MCF 10A (cell line): ENCODE measurements at regions of chr19 and their contacts with region 1.

Region 1: DNA sequence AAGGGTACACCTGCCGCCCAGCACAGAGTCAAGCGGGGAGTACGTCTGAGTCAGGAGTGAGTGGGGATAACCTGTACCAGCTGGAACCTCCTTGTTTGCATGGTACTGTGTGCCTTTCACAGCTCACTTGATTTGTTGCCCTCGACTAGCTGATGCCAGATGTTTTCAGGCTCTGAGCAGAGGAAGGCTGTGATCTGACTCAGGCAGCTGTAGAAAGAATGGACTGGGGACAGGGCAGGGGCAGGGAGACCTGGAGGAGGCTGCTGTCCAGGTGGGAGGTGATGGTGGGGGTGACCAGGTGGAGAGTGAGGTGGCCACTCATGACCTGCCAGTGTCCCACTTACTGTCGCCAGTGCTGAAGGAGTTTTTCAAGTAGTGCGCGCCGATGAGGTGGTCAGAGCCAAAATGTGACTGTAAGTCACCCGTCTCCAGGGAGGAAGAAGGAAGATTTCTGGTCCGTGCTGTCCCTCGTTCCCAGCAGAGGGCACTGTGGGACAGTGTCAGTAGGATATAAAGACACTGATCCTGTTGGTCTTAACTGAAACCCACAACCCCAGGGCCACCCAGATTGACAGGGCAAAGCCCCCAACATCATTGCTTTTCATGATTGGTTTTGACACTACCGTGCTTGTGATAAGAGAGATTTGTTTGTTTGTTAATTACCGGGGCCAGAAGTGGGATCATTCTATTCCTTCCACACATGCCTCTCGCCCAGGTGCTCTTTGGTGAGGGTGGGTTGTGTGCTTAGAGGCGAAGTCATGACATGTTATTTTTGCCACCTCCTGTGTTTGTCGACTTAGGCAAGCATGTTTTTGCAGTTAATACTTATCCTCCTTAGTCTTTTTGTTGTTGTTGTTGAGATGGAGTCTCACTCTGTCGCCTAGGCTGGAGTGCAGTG is 128.4 kb downstream of the DPF1 start:
- DNase-seq: peak; percentile 77
- H3K4me3 Mint-ChIP-seq: no peak overlapping the region
- H3K27ac Mint-ChIP-seq: no peak overlapping the region
- H3K4me1 Mint-ChIP-seq: no peaks in the 10 kb centered on the region
- H3K27me3 Mint-ChIP-seq: no peaks in the 10 kb centered on the region
- CTCF ChIP-seq: peak; percentile 48

Region 2: GRCh38 chr19:37991841-37992248 is 103.8 kb before region 1 on chr19:
- CTCF ChIA-PET with region 1: interaction called, 4 read pairs
- POLR2A ChIA-PET with region 1: no interaction called
- intact Hi-C with region 1: loop called (anchors 1 kb)
- DNase-seq: no peak
- H3K4me3 Mint-ChIP-seq: no peak overlapping the region
- H3K27ac Mint-ChIP-seq: no peak overlapping the region
- H3K4me1 Mint-ChIP-seq: peaks cover 19% of the 10 kb centered on the region
- H3K27me3 Mint-ChIP-seq: no peaks in the 10 kb centered on the region
- CTCF ChIP-seq: no peak

Region 3: GRCh38 chr19:38022791-38023670 is 72.6 kb before region 1 on chr19:
- CTCF ChIA-PET with region 1: no interaction called
- POLR2A ChIA-PET with region 1: no interaction called
- intact Hi-C with region 1: no loop called
- DNase-seq: no peak
- H3K4me3 Mint-ChIP-seq: no peak overlapping the region
- H3K27ac Mint-ChIP-seq: no peak overlapping the region
- H3K4me1 Mint-ChIP-seq: no peaks in the 10 kb centered on the region
- H3K27me3 Mint-ChIP-seq: no peaks in the 10 kb centered on the region
- CTCF ChIP-seq: no peak

Region 4: DNA sequence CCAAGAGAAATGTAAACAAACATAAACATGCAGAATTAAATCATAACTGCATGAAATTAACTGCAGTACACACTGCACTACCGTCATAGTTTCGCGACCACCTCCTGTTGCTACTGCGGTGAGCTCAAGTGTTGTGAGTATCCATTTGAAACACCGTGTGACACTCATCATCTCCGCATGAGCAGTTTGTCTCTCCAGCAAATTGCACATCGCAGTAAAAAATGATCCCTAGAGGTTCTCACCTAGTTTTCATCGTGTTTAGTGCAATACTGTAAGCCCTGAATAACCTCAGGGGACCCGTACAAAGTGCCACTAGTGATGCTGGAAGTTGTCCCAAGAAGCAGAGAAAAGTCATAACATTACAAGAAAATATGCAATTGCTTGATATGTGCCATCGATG is 19.3 kb before region 1 on chr19:
- CTCF ChIA-PET with region 1: interaction called, 13 read pairs
- POLR2A ChIA-PET with region 1: interaction called, 3 read pairs
- intact Hi-C with region 1: no loop called
- DNase-seq: no peak
- H3K4me3 Mint-ChIP-seq: no peak overlapping the region
- H3K27ac Mint-ChIP-seq: no peak overlapping the region
- H3K4me1 Mint-ChIP-seq: peaks cover 12% of the 10 kb centered on the region
- H3K27me3 Mint-ChIP-seq: no peaks in the 10 kb centered on the region
- CTCF ChIP-seq: no peak

Region 5: GRCh38 chr19:38082256-38083118 is 13.2 kb before region 1 on chr19:
- CTCF ChIA-PET with region 1: interaction called, 13 read pairs
- POLR2A ChIA-PET with region 1: interaction called, 3 read pairs
- intact Hi-C with region 1: no loop called
- DNase-seq: no peak
- H3K4me3 Mint-ChIP-seq: no peak overlapping the region
- H3K27ac Mint-ChIP-seq: no peak overlapping the region
- H3K4me1 Mint-ChIP-seq: peaks cover 12% of the 10 kb centered on the region
- H3K27me3 Mint-ChIP-seq: no peaks in the 10 kb centered on the region
- CTCF ChIP-seq: no peak

Region 6: DNA sequence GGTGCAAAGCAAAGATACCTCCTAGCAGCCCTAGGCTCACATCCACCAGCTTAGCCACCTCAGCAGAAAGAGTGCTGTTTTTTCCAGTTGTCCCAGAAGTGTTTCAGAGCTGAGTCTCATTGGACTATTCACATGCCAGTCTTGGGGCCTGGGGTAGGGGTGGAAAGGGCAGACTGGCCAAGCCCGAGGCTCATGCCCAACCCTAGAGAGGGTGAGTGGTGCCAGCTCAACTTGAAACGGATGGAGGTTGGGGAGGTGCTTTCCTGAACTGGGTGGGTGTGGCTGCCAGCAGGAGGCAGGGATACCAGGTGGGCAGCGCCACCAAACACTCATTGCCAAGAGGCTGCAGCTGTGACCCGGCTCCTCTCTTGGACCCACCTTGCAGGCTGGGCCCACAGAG is 11.5 kb after region 1 on chr19:
- CTCF ChIA-PET with region 1: interaction called, 12 read pairs
- POLR2A ChIA-PET with region 1: no interaction called
- intact Hi-C with region 1: no loop called
- DNase-seq: peak; percentile 7
- H3K4me3 Mint-ChIP-seq: no peak overlapping the region
- H3K27ac Mint-ChIP-seq: peak overlapping the region; percentile 42
- H3K4me1 Mint-ChIP-seq: peaks cover 7% of the 10 kb centered on the region
- H3K27me3 Mint-ChIP-seq: no peaks in the 10 kb centered on the region
- CTCF ChIP-seq: no peak